Mammary epithelial cell (primary cell): ENCODE measurements at regions of chr1 and their contacts with region 1.

Region 1: GRCh38 chr1:156020292-156021089 is at the start of gene SSR2:
- DNase-seq: peak; percentile 90
- H3K4me3 ChIP-seq: peak within 1 kb of the TSS; percentile 40 to 91 (median 69)
- H3K27ac ChIP-seq: peak within 1 kb of the TSS; percentile 14
- H3K4me1 ChIP-seq: peaks cover 14% of the 10 kb centered on the region
- H3K27me3 ChIP-seq: no peaks in the 10 kb centered on the region
- CTCF ChIP-seq: no peak
- total RNA-seq, gene SSR2: 158 to 195 TPM

Region 2: GRCh38 chr1:154911691-154912550 is 1108.6 kb before region 1 on chr1:
- CTCF ChIA-PET with region 1: no interaction called
- dilution Hi-C with region 1: no loop called
- in situ Hi-C with region 1: no loop called
- intact Hi-C with region 1: no loop called
- DNase-seq: no peak
- H3K4me3 ChIP-seq: no peak overlapping the region
- H3K27ac ChIP-seq: no peak overlapping the region
- H3K4me1 ChIP-seq: no peaks in the 10 kb centered on the region
- H3K27me3 ChIP-seq: no peaks in the 10 kb centered on the region
- CTCF ChIP-seq: no peak

Region 3: DNA sequence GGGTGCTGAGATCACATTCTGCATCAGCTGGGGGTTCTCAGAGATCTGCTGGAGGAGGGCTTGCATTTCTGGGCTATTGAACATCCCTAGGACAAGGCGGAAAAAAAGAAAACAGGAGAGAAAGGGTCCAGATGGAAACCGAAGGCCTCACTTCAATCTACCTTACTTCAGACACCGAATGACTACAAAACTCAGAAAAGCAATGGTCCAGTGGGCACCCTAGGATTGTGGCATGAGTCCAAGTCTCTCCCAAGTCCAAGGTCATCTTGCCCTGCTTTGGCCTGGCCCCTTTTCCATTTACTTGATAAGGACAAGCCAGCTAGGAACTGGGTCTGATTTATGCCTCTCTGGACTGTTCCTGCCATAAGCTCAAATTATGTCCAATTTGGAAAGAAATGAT is 22.3 kb after region 1 on chr1:
- CTCF ChIA-PET with region 1: no interaction called
- dilution Hi-C with region 1: no loop called
- in situ Hi-C with region 1: no loop called
- intact Hi-C with region 1: loop called (anchors 1 kb)
- DNase-seq: no peak
- H3K4me3 ChIP-seq: no peak overlapping the region
- H3K27ac ChIP-seq: no peak overlapping the region
- H3K4me1 ChIP-seq: no peaks in the 10 kb centered on the region
- H3K27me3 ChIP-seq: no peaks in the 10 kb centered on the region
- CTCF ChIP-seq: no peak

Region 4: DNA sequence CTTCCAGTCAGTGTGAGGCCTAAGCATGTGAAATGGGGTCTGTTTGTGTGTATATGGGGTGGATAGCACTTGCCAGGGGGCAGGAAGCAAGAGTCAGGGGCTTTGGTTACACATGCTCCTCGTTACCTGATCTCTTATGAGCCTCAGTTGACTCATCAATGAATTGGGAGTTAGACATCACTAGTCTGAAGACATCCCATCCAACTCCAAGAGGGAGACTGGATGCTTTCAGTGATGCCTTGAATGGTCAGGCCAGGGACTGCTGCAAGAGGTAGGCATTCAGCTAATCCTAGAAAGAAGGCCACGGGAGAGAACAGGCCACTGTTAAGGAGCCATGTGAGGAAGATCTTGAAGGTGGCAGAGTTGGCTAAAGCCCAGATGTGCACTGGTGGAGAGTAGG is 46.8 kb after region 1 on chr1:
- CTCF ChIA-PET with region 1: no interaction called
- dilution Hi-C with region 1: no loop called
- in situ Hi-C with region 1: no loop called
- intact Hi-C with region 1: loop called (anchors 1 kb)
- DNase-seq: no peak
- H3K4me3 ChIP-seq: no peak overlapping the region
- H3K27ac ChIP-seq: no peak overlapping the region
- H3K4me1 ChIP-seq: peaks cover 7% of the 10 kb centered on the region
- H3K27me3 ChIP-seq: no peaks in the 10 kb centered on the region
- CTCF ChIP-seq: no peak